Head of caudate nucleus (tissue), 42 donors: ENCODE measurements at regions of chr2 and their contacts with region 1.

Region 1: GRCh38 chr2:96208143-96209010 is at the start of gene STARD7:
- DNase-seq: peak; percentile 94 to 99 (median 98)

Region 2: DNA sequence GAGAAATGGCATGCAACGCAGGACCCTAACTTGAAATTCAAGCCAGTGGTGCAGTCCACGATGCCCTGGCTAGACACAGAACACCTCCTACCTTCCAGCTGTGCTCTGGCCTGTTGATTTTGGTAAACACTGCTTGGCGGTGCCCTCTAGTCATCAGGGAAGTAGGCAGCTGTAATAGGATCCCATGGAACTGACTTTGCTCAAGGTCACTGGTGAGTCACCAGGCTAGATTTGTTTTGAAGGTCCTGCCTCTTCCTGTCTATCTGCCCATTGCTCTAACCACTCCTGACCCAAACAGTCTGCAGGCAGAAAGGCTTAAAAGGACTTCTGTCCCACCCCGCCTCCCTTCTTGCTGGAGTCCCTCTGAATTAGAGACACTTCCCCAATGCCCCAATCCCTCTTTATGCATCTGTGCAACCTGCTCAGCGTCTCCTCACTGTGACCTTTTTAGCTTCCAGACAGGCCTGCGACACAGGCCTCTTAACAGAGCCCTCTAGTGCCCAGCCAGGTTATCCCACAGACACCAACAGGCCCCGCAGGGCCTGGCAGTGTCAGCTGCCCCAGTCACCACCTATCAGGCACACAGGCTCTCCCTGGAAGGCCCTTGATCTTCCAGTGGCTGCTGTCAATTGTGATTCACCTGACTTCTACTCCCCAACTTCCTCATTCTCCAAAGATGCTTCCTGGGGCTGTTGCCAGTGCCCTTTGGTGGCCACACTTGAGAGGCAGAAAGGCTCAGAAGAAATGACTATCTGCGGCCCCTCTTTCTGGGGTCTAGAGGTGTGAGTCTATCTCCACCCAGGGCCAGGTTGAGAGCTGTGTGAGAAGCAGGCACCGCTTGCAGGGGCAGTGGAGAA is 52.3 kb after region 1 on chr2:
- intact Hi-C with region 1: loop called (anchors 5 kb)
- DNase-seq: peak in 19 of 42 donors; percentile 23 to 59 (median 38)